ENCODE measurements at regions of chr5 and their contacts with region 1.

Region 1: DNA sequence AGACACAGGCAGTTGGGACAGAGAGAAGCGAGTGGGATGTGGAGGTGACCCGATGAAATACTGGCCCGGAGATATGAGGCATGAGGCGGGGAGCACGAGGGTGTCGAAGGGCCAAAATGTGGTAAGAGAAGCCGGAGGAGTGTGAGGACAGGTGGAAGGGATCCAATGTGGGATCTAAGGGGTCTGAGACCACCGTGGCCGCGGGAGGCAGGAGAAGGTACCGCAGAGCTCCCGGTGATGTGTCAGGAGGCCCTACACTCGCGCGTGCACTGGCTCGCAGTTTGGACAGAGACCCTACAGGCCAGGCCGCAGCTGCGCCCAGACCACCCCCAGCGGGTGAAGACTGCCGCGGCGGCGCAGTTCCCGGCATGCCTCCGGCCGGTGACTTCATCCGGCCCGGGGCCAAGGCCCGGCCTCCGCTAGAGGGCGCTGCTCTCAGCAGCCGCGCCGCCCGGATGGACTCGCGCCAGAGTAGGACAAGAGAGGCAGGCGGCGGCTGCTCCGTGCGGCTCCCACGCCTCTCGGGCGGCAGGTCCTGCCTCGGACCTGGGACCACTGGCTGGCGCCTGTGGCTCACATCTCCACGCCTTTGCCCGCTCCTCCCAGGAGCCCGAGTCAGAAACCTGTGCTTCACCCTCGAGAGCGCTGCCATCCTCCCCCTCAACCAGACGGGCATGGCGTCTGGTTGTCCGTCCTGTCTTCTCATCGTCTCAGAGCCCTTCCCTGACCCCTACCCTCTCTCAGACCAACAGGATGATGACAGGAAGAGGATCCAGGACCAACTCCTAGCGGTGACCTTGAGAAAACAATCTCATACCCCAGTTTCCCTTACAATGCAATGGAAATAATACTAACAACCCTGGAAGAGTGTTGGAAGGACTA is 35.4 kb upstream of the STING1 start:
- DNase-seq: peak; percentile 62 to 96
- H3K4me3 ChIP-seq: peak overlapping the region; percentile 66 to 68
- H3K27ac ChIP-seq: peak overlapping the region; percentile 77 to 83
- H3K4me1 ChIP-seq: peaks cover 0 to 2% of the 10 kb centered on the region in 2 donors
- H3K27me3 ChIP-seq: no peaks in the 10 kb centered on the region
- CTCF ChIP-seq: peak; percentile 95 to 99 (median 98)

Region 2: GRCh38 chr5:139482050-139482889 is 35.7 kb before region 1 on chr5 and contains the start of gene STING1:
- intact Hi-C with region 1: loop called (anchors 1 kb)
- DNase-seq: peak; percentile 53 to 93
- H3K4me3 ChIP-seq: peak within 1 kb of the TSS; percentile 64 to 74
- H3K27ac ChIP-seq: peak within 1 kb of the TSS; percentile 96 to 98
- H3K4me1 ChIP-seq: peaks cover 4 to 27% of the 10 kb centered on the region in 2 donors
- H3K27me3 ChIP-seq: no peaks in the 10 kb centered on the region
- CTCF ChIP-seq: no peak
- total RNA-seq, gene STING1: 179 TPM

Region 3: DNA sequence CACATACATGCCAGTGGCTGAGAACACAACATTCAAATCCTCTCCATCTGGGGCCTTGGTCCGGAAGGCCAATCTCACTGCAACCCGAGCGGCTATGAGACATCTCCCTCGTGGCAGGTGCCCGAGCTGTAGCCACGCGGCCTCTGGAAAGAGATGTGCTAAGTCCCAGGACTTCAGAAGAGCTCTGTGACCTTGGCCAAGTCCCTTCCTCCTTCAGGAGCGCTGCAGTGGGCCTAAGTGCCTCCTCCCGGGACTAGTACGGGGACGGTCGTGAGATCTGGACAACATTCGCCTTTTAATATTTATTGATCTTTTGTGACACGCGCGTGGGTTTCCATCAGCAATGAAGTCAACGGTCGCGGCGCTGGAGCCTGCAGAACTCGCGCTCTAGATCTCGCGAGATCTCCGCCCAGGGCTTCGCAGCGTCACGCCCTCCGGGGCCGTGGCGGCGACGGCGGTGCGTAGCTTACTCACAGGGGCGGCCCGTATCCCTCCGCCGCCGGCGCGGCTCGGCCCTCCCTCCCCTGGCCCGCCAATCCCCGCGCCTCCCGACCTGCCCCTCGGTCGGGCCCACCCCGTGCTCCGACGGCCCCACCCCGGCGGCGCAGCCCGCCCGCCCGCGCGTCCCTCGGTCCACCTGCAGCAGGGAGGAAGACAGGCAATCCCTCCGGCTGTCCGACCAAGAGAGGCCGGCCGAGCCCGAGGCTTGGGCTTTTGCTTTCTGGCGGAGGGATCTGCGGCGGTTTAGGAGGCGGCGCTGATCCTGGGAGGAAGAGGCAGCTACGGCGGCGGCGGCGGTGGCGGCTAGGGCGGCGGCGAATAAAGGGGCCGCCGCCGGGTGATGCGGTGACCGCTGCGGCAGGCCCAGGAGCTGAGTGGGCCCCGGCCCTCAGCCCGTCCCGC is 43.1 kb after region 1 on chr5 and contains the start of gene UBE2D2:
- intact Hi-C with region 1: loop called (anchors 1 kb)
- DNase-seq: peak; percentile 78 to 98
- H3K4me3 ChIP-seq: peak within 1 kb of the TSS; percentile 86 to 91
- H3K27ac ChIP-seq: peak within 1 kb of the TSS; percentile 96 to 99
- H3K4me1 ChIP-seq: peaks cover 14 to 38% of the 10 kb centered on the region in 2 donors
- H3K27me3 ChIP-seq: no peaks in the 10 kb centered on the region
- CTCF ChIP-seq: no peak
- total RNA-seq, gene UBE2D2: 65.9 TPM

Measured in ascending aorta (tissue), 2 donors.